ENCODE measurements at regions of chr21 and their contacts with region 1.

Region 1: DNA sequence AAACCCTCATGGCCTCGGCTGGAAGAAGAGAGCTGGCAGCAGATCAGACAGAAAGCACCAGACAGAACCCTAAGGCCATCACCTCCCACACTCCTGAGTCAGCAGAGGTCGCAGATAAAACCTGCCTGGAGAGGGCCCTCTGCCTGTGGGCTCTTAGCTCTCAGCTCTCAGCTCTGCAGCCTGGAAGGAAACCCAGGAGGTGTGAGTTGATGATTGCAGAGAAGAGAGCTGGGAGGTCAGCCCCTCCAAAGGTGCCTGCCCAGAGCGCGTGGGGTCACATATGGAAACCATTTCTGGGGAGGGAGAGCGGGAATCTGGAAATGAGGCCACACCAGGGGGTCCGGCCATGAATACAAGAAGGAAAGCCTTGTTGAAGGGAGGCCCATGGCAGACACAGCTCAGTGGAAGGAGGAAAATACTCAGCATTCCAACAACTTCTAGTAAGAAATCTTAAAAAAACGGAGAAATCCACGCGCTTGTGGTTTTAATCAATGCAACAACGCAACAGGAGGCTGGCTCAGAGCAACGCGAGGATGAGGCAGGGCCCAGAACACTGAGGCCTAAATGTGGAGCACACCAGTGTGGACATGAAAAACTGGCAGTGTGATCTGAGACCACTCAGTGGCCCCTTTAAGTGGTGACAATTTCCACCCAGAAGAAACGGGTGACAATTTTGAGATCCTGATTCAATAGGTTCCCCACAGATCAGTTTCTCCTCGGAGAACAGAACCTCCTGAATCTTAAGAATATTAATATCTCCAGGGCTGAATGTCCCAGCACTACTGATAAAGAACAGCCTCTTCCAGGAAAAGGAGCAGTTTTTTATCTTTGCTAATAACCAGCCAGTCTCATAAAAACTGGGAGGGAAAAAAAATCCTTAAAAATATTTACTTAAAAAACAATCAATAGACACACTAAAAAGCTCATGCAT is 45.7 kb downstream of the PSMG1 start:
- H3K4me3 ChIP-seq: no peak overlapping the region
- H3K27ac ChIP-seq: no peak overlapping the region
- H3K4me1 ChIP-seq: peaks cover 3% of the 10 kb centered on the region; the same call in 1 of the 2 replicates
- CTCF ChIP-seq: no peak

Region 2: GRCh38 chr21:38503583-38503982 is 633.9 kb before region 1 on chr21:
- CTCF ChIA-PET with region 1: interaction called, 11 read pairs
- POLR2A ChIA-PET with region 1: no interaction called
- H3K4me3 ChIP-seq: no peak overlapping the region
- H3K27ac ChIP-seq: no peak overlapping the region
- H3K4me1 ChIP-seq: no peaks in the 10 kb centered on the region
- CTCF ChIP-seq: no peak

Region 3: GRCh38 chr21:38669176-38669575 is 468.3 kb before region 1 on chr21:
- CTCF ChIA-PET with region 1: interaction called, 16 read pairs
- POLR2A ChIA-PET with region 1: no interaction called
- H3K4me3 ChIP-seq: no peak overlapping the region
- H3K27ac ChIP-seq: no peak overlapping the region
- H3K4me1 ChIP-seq: no peaks in the 10 kb centered on the region
- CTCF ChIP-seq: peak; percentile 45

Region 4: GRCh38 chr21:38733973-38734546 is 403.5 kb before region 1 on chr21:
- CTCF ChIA-PET with region 1: interaction called, 18 read pairs
- POLR2A ChIA-PET with region 1: no interaction called
- H3K4me3 ChIP-seq: peak overlapping the region; percentile 13
- H3K27ac ChIP-seq: no peak overlapping the region
- H3K4me1 ChIP-seq: peaks cover 6% of the 10 kb centered on the region; the same call in 1 of the 2 replicates
- CTCF ChIP-seq: peak; percentile 85

Region 5: GRCh38 chr21:39125752-39126485 is 11.6 kb before region 1 on chr21:
- CTCF ChIA-PET with region 1: interaction called, 10 read pairs
- POLR2A ChIA-PET with region 1: no interaction called
- H3K4me3 ChIP-seq: no peak overlapping the region
- H3K27ac ChIP-seq: no peak overlapping the region
- H3K4me1 ChIP-seq: no peaks in the 10 kb centered on the region
- CTCF ChIP-seq: no peak; the same call in 1 of the 2 replicates

Region 6: GRCh38 chr21:39204134-39204533 is 66.6 kb after region 1 on chr21:
- CTCF ChIA-PET with region 1: no interaction called
- POLR2A ChIA-PET with region 1: no interaction called
- H3K4me3 ChIP-seq: no peak overlapping the region
- H3K27ac ChIP-seq: no peak overlapping the region
- H3K4me1 ChIP-seq: no peaks in the 10 kb centered on the region
- CTCF ChIP-seq: no peak

Measured in HEK293 (cell line).